Naive thymus-derived CD4-positive, alpha-beta T cell (primary cell): ENCODE measurements at regions of chr14 and their contacts with region 1.

Region 1: GRCh38 chr14:56474419-56475022 is 105.1 kb upstream of the TMEM260 start:
- DNase-seq: peak in 5 of 9 donors; percentile 32 to 51 (median 43)
- ATAC-seq: peak; percentile 63
- H3K4me3 ChIP-seq: no peak overlapping the region
- H3K4me3 Mint-ChIP-seq: no peak overlapping the region
- H3K27ac ChIP-seq: no peak overlapping the region
- H3K27ac Mint-ChIP-seq: no peak overlapping the region
- H3K4me1 ChIP-seq: no peaks in the 10 kb centered on the region
- H3K4me1 Mint-ChIP-seq: no peaks in the 10 kb centered on the region
- H3K27me3 ChIP-seq: no peaks in the 10 kb centered on the region
- H3K27me3 Mint-ChIP-seq: peaks cover 0 to 23% (median 12%) of the 10 kb centered on the region in 5 donors

Region 2: GRCh38 chr14:55085060-55085660 is 1389.4 kb before region 1 on chr14:
- CTCF ChIA-PET with region 1: no interaction called
- POLR2A ChIA-PET with region 1: no interaction called
- intact Hi-C with region 1: loop called in 1 of 2 experiments (anchors 5 kb)
- DNase-seq: no peak
- ATAC-seq: no peak
- H3K4me3 ChIP-seq: no peak overlapping the region
- H3K4me3 Mint-ChIP-seq: no peak overlapping the region
- H3K27ac ChIP-seq: no peak overlapping the region
- H3K27ac Mint-ChIP-seq: no peak overlapping the region
- H3K4me1 ChIP-seq: no peaks in the 10 kb centered on the region
- H3K4me1 Mint-ChIP-seq: peaks cover 0 to 4% (median 0%) of the 10 kb centered on the region in 7 donors
- H3K27me3 ChIP-seq: no peaks in the 10 kb centered on the region
- H3K27me3 Mint-ChIP-seq: peaks cover 0 to 11% (median 0%) of the 10 kb centered on the region in 5 donors

Region 3: GRCh38 chr14:55438066-55438683 is 1036.3 kb before region 1 on chr14:
- CTCF ChIA-PET with region 1: interaction called, 4 read pairs
- POLR2A ChIA-PET with region 1: no interaction called
- intact Hi-C with region 1: loop called in 1 of 2 experiments (anchors 1 kb)
- DNase-seq: peak in 4 of 9 donors; percentile 15 to 29 (median 16)
- ATAC-seq: no peak
- H3K4me3 ChIP-seq: no peak overlapping the region
- H3K4me3 Mint-ChIP-seq: no peak overlapping the region
- H3K27ac ChIP-seq: no peak overlapping the region
- H3K27ac Mint-ChIP-seq: peak overlapping the region in 2 of 9 donors; percentile 36 to 84
- H3K4me1 ChIP-seq: peaks cover 15 to 23% of the 10 kb centered on the region in 2 donors
- H3K4me1 Mint-ChIP-seq: peaks cover 11 to 28% (median 25%) of the 10 kb centered on the region in 7 donors
- H3K27me3 ChIP-seq: no peaks in the 10 kb centered on the region
- H3K27me3 Mint-ChIP-seq: peaks cover 0 to 10% (median 0%) of the 10 kb centered on the region in 5 donors

Region 4: GRCh38 chr14:55707365-55707804 is 767.1 kb before region 1 on chr14:
- CTCF ChIA-PET with region 1: interaction called, 4 read pairs
- POLR2A ChIA-PET with region 1: no interaction called
- intact Hi-C with region 1: loop called (anchors 1 kb)
- DNase-seq: peak in 4 of 9 donors; percentile 2 to 31 (median 17)
- ATAC-seq: no peak
- H3K4me3 ChIP-seq: no peak overlapping the region
- H3K4me3 Mint-ChIP-seq: no peak overlapping the region
- H3K27ac ChIP-seq: no peak overlapping the region
- H3K27ac Mint-ChIP-seq: no peak overlapping the region
- H3K4me1 ChIP-seq: no peaks in the 10 kb centered on the region
- H3K4me1 Mint-ChIP-seq: no peaks in the 10 kb centered on the region
- H3K27me3 ChIP-seq: no peaks in the 10 kb centered on the region
- H3K27me3 Mint-ChIP-seq: peaks cover 0 to 2% (median 0%) of the 10 kb centered on the region in 5 donors

Region 5: GRCh38 chr14:55846826-55847446 is 627.6 kb before region 1 on chr14:
- CTCF ChIA-PET with region 1: no interaction called
- POLR2A ChIA-PET with region 1: no interaction called
- intact Hi-C with region 1: loop called in 1 of 2 experiments (anchors 10 kb)
- DNase-seq: no peak
- ATAC-seq: no peak
- H3K4me3 ChIP-seq: no peak overlapping the region
- H3K4me3 Mint-ChIP-seq: no peak overlapping the region
- H3K27ac ChIP-seq: no peak overlapping the region
- H3K27ac Mint-ChIP-seq: no peak overlapping the region
- H3K4me1 ChIP-seq: no peaks in the 10 kb centered on the region
- H3K4me1 Mint-ChIP-seq: no peaks in the 10 kb centered on the region
- H3K27me3 ChIP-seq: no peaks in the 10 kb centered on the region
- H3K27me3 Mint-ChIP-seq: peaks cover 0 to 12% (median 0%) of the 10 kb centered on the region in 5 donors

Region 6: GRCh38 chr14:56339855-56340701 is 134.4 kb before region 1 on chr14:
- CTCF ChIA-PET with region 1: no interaction called
- POLR2A ChIA-PET with region 1: no interaction called
- intact Hi-C with region 1: loop called in 1 of 2 experiments (anchors 1 kb)
- DNase-seq: peak; percentile 14 to 57 (median 46)
- ATAC-seq: peak; percentile 91
- H3K4me3 ChIP-seq: no peak overlapping the region
- H3K4me3 Mint-ChIP-seq: peak overlapping the region in 1 of 10 donors; percentile 20
- H3K27ac ChIP-seq: no peak overlapping the region
- H3K27ac Mint-ChIP-seq: peak overlapping the region in 1 of 9 donors; percentile 16
- H3K4me1 ChIP-seq: no peaks in the 10 kb centered on the region
- H3K4me1 Mint-ChIP-seq: peaks cover 0 to 14% (median 0%) of the 10 kb centered on the region in 7 donors
- H3K27me3 ChIP-seq: no peaks in the 10 kb centered on the region
- H3K27me3 Mint-ChIP-seq: no peaks in the 10 kb centered on the region